ENCODE measurements at regions of chrX and their contacts with region 1.

Region 1: DNA sequence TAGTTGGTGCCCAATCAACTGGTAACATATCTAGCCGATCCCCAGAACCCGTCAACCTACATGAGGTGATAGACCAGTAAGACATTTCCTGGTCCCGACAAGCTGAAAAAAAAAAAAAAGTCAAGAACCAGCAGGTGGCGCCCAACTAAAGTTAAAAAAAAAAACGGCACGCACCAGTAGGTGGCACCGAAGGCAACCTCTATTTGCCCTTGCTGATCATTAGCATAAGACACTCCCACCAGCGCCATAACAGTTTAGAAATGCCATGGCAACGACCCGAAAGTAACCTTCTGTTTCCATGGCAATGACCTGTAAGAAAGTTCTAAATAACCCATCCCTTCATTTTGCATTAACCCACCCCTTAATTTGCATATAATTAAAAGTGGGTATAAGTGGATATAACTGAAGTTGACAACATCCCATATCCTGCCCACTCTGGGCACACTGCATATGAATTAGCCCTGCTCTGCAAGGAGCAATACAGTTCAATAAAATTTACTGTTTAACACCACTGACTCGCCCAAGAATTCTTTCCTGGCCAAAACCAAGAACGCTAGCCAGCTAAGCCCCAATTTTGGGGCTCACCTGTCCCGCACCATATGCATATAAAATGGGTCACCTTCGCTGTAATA is 83.9 kb upstream of the SPANXB1 start:
- DNase-seq: peak; percentile 14 to 57 (median 25)
- ATAC-seq: peak; percentile 91
- H3K4me3 ChIP-seq: no peak overlapping the region
- H3K27ac ChIP-seq: no peak overlapping the region
- H3K4me1 ChIP-seq: no peaks in the 10 kb centered on the region
- H3K27me3 ChIP-seq: no peaks in the 10 kb centered on the region
- CTCF ChIP-seq: peak; percentile 68 to 99 (median 97)
- EP300 ChIP-seq: no peak
- POLR2A ChIP-seq: no peak
- RAD21 ChIP-seq: peak; percentile 28 to 36

Region 2: DNA sequence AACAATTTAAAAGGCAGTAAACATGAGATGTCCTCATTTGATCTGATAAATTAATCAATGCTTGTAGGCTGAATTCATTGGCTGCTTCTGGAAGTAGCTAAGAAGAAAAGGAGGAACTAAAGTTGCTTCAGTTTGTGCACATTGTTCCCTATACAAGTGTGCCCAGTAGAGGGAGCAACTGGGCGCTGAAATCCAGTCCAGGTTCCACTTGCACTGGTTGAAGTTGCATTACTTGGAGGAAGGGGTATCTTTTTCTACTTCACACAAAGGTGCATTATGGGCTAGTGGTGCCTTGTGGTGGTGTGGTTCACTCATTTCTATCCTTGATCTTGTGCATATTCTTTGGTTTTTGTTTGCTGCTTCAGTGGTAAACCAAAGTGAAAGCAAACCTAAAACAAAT is 345.8 kb before region 1 on chrX:
- CTCF ChIA-PET with region 1: no interaction called
- POLR2A ChIA-PET with region 1: no interaction called
- in situ Hi-C with region 1: no loop called
- intact Hi-C with region 1: no loop called
- DNase-seq: peak; percentile 1 to 14 (median 5)
- ATAC-seq: no peak
- H3K4me3 ChIP-seq: no peak overlapping the region
- H3K27ac ChIP-seq: no peak overlapping the region
- H3K4me1 ChIP-seq: no peaks in the 10 kb centered on the region
- H3K27me3 ChIP-seq: no peaks in the 10 kb centered on the region
- CTCF ChIP-seq: peak in 1 of 3 experiments; percentile 37; a peak in 2 of 6 replicates
- EP300 ChIP-seq: no peak
- POLR2A ChIP-seq: no peak
- RAD21 ChIP-seq: no peak

Region 3: DNA sequence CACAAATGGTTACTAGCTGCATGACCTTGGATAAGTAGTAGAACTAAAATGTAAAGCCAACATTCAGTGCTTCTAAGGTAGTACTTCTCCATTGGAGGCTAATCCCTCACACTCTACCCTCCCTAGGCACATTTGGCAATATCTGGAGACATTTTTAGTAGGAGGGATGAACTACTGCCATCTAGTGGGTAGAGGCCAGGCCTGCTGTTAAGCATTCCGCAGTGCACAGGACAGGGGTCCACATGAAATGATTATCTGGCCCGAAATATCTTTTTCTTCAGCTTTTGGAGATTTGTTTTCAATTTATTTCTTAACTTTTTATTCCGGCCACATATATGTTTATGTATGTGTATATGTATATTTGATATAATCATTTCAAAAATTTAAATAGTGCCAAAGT is 359.8 kb after region 1 on chrX:
- CTCF ChIA-PET with region 1: interaction called, 4 read pairs
- POLR2A ChIA-PET with region 1: no interaction called
- in situ Hi-C with region 1: no loop called
- intact Hi-C with region 1: loop called (anchors 2 kb)
- DNase-seq: peak; percentile 4 to 17 (median 10)
- ATAC-seq: peak; percentile 52; the same call in 1 of the 3 replicates
- H3K4me3 ChIP-seq: no peak overlapping the region
- H3K27ac ChIP-seq: no peak overlapping the region
- H3K4me1 ChIP-seq: no peaks in the 10 kb centered on the region
- H3K27me3 ChIP-seq: no peaks in the 10 kb centered on the region
- CTCF ChIP-seq: peak in 2 of 3 experiments; percentile 20 to 24; a peak in 2 of 6 replicates
- EP300 ChIP-seq: no peak
- POLR2A ChIP-seq: no peak
- RAD21 ChIP-seq: peak in 1 of 2 experiments; percentile 46; a peak in 2 of 4 replicates

Region 4: DNA sequence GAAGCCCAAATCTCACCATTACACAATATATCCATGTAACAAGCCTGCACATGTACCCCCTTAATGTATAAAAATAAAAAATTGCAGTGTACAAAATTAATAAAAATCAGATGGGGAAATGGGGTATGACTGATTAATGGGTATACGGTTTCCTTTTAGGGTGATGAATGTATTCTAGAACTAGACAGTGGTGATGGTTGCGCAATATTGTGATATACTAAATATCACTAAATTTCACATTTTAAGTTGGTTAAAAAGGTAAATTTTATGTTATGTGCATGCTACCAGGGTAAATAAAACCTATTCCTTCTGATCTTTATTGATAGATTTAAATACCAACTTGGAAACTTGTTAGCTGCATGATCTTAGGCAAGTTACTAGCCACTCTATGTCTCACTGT is 536.6 kb after region 1 on chrX:
- CTCF ChIA-PET with region 1: no interaction called
- POLR2A ChIA-PET with region 1: no interaction called
- in situ Hi-C with region 1: no loop called
- intact Hi-C with region 1: no loop called
- DNase-seq: no peak
- ATAC-seq: no peak
- H3K4me3 ChIP-seq: no peak overlapping the region
- H3K27ac ChIP-seq: no peak overlapping the region
- H3K4me1 ChIP-seq: no peaks in the 10 kb centered on the region
- H3K27me3 ChIP-seq: no peaks in the 10 kb centered on the region
- CTCF ChIP-seq: no peak
- EP300 ChIP-seq: no peak
- POLR2A ChIP-seq: no peak
- RAD21 ChIP-seq: no peak

Measured in K562 (cell line).